OCI-LY7 (cell line): ENCODE measurements at regions of chr17 and their contacts with region 1.

Region 1: DNA sequence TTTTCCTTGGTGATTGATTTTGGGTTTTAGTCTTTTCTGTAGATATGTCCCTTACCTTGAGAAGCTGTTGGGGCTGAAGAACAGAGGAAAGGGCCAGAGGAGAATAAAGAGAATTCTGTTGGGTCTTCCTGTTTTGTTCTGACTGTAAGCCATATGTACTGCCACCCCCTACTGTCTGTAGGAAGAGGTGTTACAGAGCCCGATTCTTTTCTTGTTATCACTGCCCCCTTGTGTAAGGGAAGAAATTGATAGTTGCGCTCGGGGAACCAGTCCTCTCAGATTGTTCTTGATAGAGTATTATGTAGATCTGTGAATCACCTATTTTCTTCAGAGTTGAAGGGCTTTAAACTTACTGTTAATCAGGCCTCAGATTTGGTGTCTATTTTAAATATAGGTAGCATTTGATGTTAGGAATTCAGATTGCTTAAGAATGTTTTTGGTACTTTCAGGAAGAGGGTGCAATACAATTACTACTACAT is 2.4 kb downstream of the TANC2 start:
- DNase-seq: peak; percentile 85
- H3K4me3 ChIP-seq: no peak overlapping the region
- H3K27ac ChIP-seq: no peak overlapping the region
- H3K4me1 ChIP-seq: peaks cover 23% of the 10 kb centered on the region
- CTCF ChIP-seq: peak; percentile 98

Region 2: GRCh38 chr17:62671583-62672312 is 296.7 kb before region 1 on chr17:
- CTCF ChIA-PET with region 1: no interaction called
- POLR2A ChIA-PET with region 1: no interaction called
- intact Hi-C with region 1: loop called (anchors 1 kb)
- DNase-seq: no peak
- H3K4me3 ChIP-seq: no peak overlapping the region
- H3K27ac ChIP-seq: no peak overlapping the region
- H3K4me1 ChIP-seq: no peaks in the 10 kb centered on the region
- CTCF ChIP-seq: no peak

Region 3: DNA sequence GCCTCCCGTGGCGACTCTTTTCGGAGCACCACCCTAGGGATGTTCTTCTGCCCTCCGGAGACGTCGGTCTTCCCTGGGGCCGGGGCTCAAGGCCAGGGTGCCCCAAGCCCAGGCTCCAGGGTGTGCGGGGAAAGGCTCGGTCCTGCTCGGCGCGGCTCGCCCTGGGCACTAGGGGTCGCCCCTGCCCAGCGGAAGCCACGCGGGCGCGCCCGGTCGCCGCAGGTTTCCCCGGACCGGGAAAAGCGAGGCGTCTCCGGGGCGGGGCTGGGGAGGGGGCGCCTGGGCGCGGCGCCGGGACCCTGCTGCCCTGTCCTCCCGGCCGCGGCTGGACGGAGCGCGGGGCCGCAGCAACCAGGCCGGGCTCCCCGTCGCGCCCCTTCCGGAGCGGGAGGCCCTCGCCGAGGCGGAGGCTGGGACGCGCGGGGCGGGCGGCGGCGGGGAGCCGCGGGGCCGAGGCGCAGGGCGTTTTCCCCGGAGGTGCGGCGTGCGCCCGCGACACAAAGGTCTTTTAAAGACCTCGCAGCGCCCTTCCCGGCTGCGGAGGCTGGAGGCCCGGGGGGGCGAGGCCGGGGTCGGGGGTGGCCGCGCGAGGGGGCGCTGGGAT is 264.6 kb before region 1 on chr17:
- CTCF ChIA-PET with region 1: no interaction called
- POLR2A ChIA-PET with region 1: no interaction called
- intact Hi-C with region 1: loop called (anchors 2 kb)
- DNase-seq: peak; percentile 51
- H3K4me3 ChIP-seq: peak overlapping the region; percentile 29
- H3K27ac ChIP-seq: no peak overlapping the region
- H3K4me1 ChIP-seq: no peaks in the 10 kb centered on the region
- CTCF ChIP-seq: peak; percentile 70

Region 4: GRCh38 chr17:62724398-62725146 is 243.9 kb before region 1 on chr17:
- CTCF ChIA-PET with region 1: no interaction called
- POLR2A ChIA-PET with region 1: no interaction called
- intact Hi-C with region 1: loop called (anchors 5 kb)
- DNase-seq: peak; percentile 14
- H3K4me3 ChIP-seq: no peak overlapping the region
- H3K27ac ChIP-seq: no peak overlapping the region
- H3K4me1 ChIP-seq: no peaks in the 10 kb centered on the region
- CTCF ChIP-seq: no peak

Region 5: GRCh38 chr17:63096426-63096825 is 127.9 kb after region 1 on chr17:
- CTCF ChIA-PET with region 1: no interaction called
- POLR2A ChIA-PET with region 1: no interaction called
- intact Hi-C with region 1: no loop called
- DNase-seq: no peak
- H3K4me3 ChIP-seq: no peak overlapping the region
- H3K27ac ChIP-seq: no peak overlapping the region
- H3K4me1 ChIP-seq: no peaks in the 10 kb centered on the region
- CTCF ChIP-seq: no peak